PC-9 (cell line): ENCODE measurements at regions of chr2 and their contacts with region 1.

Region 1: DNA sequence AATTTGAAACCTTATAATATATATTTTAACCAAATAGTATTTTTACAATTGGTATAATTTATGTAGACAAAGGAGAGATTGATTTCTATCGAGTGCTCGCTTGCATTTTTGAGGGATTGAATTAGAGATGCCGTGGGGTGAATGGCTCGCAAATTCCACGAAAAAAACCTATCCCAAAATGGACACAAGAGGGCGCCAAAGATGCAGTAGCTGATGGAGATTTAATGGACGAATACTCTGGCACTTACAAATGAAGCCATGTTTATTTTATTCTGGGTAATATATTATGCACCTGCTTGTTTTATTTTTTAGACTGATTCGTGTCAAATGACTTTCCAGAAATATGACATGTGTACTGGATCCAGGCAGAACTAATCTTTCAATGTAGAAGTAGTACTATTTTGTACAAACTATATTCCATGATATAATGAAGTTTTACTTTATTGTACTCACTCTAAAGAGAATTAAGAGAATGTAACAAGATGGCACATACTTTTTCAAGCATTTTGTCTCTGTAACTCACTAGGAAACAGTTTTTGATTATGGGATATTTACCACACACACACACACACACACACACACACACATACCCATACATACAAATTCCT is 505.4 kb downstream of the PLCL1 start:
- DNase-seq: peak; percentile 44 to 49
- H3K4me3 ChIP-seq: no peak overlapping the region
- H3K27ac ChIP-seq: no peak overlapping the region
- H3K4me1 ChIP-seq: no peaks in the 10 kb centered on the region
- H3K27me3 ChIP-seq: no peaks in the 10 kb centered on the region
- CTCF ChIP-seq: peak; percentile 88

Region 2: DNA sequence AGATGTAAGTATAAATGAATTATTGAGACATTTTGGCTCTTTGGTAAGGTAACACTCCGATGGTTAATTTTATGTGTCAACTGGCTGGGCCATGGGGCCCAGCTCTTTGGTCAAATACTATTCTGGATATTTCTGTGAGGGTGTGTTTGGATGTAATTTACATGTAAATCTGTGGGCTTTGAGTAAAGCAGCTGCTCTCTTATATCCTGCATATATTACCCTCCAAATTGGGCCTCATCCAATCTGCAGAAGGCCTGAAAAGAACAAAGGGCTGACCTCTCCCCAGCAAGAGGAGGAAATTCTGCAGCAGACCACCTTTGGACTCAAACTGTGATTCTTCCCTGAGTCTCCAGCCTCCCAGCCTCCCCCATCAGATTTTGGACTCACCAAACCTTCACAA is 41.3 kb before region 1 on chr2:
- CTCF ChIA-PET with region 1: no interaction called
- POLR2A ChIA-PET with region 1: no interaction called
- intact Hi-C with region 1: no loop called
- DNase-seq: no peak
- H3K4me3 ChIP-seq: no peak overlapping the region
- H3K27ac ChIP-seq: no peak overlapping the region
- H3K4me1 ChIP-seq: no peaks in the 10 kb centered on the region
- H3K27me3 ChIP-seq: no peaks in the 10 kb centered on the region
- CTCF ChIP-seq: no peak

Region 3: DNA sequence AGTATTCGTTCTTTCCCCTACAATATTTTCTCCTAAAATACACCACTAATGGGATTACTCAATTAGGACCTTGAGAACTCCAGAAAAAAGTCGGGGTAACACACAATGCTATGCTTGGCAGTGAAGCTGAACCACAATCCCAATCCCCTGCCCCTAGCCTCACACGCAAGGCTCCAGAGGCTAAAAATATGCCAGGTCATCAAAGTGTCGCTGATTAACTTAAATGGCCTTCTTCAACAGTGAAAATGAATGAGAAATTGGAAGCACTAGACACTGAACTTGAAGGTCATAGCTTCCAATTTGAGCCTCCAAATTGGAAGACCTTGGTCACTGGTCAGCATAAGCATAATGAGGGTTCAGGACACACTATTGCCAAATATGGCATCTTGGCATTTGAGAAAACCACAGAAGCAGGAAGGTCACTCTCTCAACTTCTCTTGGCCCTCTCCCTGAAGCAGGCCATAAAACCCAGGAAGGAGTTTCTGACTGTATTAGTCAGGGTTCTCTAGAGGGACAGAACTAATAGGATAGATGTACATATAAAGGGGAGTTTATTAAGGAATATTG is 1233.9 kb after region 1 on chr2:
- CTCF ChIA-PET with region 1: interaction called, 17 read pairs
- POLR2A ChIA-PET with region 1: no interaction called
- intact Hi-C with region 1: no loop called
- DNase-seq: no peak
- H3K4me3 ChIP-seq: no peak overlapping the region
- H3K27ac ChIP-seq: no peak overlapping the region
- H3K4me1 ChIP-seq: no peaks in the 10 kb centered on the region
- H3K27me3 ChIP-seq: no peaks in the 10 kb centered on the region
- CTCF ChIP-seq: no peak

Region 4: GRCh38 chr2:199596549-199596948 is 1286.8 kb after region 1 on chr2:
- CTCF ChIA-PET with region 1: interaction called, 3 read pairs
- POLR2A ChIA-PET with region 1: no interaction called
- intact Hi-C with region 1: loop called (anchors 10 kb)
- DNase-seq: no peak
- H3K4me3 ChIP-seq: no peak overlapping the region
- H3K27ac ChIP-seq: no peak overlapping the region
- H3K4me1 ChIP-seq: no peaks in the 10 kb centered on the region
- H3K27me3 ChIP-seq: peaks cover 4% of the 10 kb centered on the region; the same call in 1 of the 2 replicates
- CTCF ChIP-seq: peak; percentile 70

Region 5: GRCh38 chr2:199739413-199740110 is 1429.8 kb after region 1 on chr2:
- CTCF ChIA-PET with region 1: no interaction called
- POLR2A ChIA-PET with region 1: no interaction called
- intact Hi-C with region 1: loop called (anchors 2 kb)
- DNase-seq: peak in 1 of 2 experiments; percentile 58
- H3K4me3 ChIP-seq: no peak overlapping the region
- H3K27ac ChIP-seq: no peak overlapping the region
- H3K4me1 ChIP-seq: peaks cover 14% of the 10 kb centered on the region
- H3K27me3 ChIP-seq: no peaks in the 10 kb centered on the region
- CTCF ChIP-seq: peak; percentile 94

Region 6: GRCh38 chr2:199861132-199861774 is 1551.5 kb after region 1 on chr2:
- CTCF ChIA-PET with region 1: no interaction called
- POLR2A ChIA-PET with region 1: no interaction called
- intact Hi-C with region 1: loop called (anchors 2 kb)
- DNase-seq: no peak
- H3K4me3 ChIP-seq: no peak overlapping the region
- H3K27ac ChIP-seq: no peak overlapping the region
- H3K4me1 ChIP-seq: no peaks in the 10 kb centered on the region
- H3K27me3 ChIP-seq: no peaks in the 10 kb centered on the region
- CTCF ChIP-seq: peak; percentile 70

Region 7: GRCh38 chr2:199940373-199940772 is 1630.6 kb after region 1 on chr2:
- CTCF ChIA-PET with region 1: interaction called, 3 read pairs
- POLR2A ChIA-PET with region 1: no interaction called
- intact Hi-C with region 1: loop called (anchors 10 kb)
- DNase-seq: peak in 1 of 2 experiments; percentile 49
- H3K4me3 ChIP-seq: no peak overlapping the region
- H3K27ac ChIP-seq: no peak overlapping the region
- H3K4me1 ChIP-seq: no peaks in the 10 kb centered on the region
- H3K27me3 ChIP-seq: no peaks in the 10 kb centered on the region
- CTCF ChIP-seq: peak; percentile 66